A673 (cell line): ENCODE measurements at regions of chr6 and their contacts with region 1.

Region 1: DNA sequence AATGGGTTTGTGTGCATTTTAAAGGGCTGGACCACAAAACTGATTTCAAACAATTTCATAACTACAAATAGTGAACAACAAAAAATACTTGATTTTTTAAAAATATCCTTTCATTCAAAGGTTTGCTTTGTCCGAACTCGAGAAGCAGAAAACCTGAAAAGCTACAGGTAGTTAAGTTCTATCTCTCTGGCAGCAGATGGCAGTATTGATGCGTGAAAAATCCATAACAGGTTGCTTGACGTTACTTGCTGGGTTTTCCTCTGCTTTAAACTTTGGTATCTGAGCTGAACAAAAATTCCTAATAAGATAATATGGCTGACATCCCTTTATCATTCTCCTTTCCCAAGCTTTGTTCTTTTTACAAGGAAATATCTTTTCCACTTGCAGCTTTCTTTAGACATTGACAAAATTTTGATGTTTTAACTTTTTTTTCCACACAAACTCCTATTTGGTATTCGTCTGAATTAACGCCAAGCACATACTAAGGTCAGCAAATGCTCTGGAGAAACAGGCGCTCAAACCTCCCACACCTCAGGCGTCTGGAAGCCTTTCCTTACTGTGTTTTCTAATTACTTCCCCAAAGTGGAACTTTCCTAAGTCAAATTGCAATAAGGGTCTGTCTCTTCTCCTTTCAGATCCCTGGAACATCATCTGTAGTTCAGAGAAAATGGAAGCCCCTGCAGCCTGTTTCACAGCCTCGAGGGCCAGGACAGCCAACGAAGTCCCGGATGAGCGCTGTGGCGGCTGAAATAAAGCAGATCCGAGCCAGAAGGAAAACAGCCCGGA is 50.3 kb upstream of the GFRAL start:
- DNase-seq: peak; percentile 73
- H3K4me3 ChIP-seq: no peak overlapping the region
- H3K27ac ChIP-seq: no peak overlapping the region
- H3K4me1 ChIP-seq: peaks cover 6% of the 10 kb centered on the region
- H3K27me3 ChIP-seq: no peaks in the 10 kb centered on the region
- CTCF ChIP-seq: peak; percentile 78

Region 2: DNA sequence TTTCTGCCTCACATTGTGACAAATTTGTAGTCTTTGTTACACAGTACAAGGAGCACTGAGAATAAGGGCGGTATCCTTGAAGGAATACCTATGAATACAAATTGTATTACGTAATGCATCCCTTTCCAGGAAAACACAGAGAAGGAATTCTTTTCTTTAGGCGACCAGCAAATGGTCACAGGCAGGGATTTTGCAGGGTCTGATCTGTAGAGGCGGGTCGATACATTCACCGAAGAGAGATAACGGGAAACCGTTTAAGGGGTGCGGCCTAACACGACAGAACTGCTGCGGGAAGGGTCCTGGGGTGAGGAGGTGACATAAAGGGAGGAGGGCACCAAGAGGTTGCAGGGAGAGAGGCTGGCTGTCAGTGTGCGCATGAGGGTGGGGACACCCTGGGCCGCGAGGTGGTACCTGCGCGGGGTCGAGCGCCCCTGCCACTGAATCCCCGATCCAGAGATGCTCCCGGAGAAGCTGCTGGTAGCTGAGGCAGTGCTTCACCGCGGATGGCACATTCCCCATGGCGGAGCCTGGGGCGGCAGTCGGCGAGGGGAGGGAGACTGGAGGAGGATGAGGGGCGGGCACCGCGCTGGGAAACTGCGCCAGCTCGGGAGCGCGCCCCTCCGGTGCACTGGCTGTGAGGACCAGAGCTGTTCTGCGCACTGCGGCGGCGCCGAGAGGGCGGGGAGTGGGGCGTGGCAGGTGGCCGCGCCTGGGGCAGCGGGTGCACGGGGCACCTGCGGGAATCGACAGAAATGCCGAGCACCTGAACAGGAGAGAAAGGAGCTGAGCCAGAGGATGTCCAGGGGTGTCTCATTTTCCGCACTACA is 301.8 kb after region 1 on chr6 and contains the start of gene HMGCLL1:
- CTCF ChIA-PET with region 1: no interaction called
- POLR2A ChIA-PET with region 1: no interaction called
- intact Hi-C with region 1: no loop called
- DNase-seq: peak; percentile 37
- H3K4me3 ChIP-seq: peak within 1 kb of the TSS; percentile 37
- H3K27ac ChIP-seq: no peak within 1 kb of the TSS
- H3K4me1 ChIP-seq: peaks cover 5% of the 10 kb centered on the region
- H3K27me3 ChIP-seq: peaks cover 18% of the 10 kb centered on the region
- CTCF ChIP-seq: no peak
- total RNA-seq, gene HMGCLL1: not detected in 2 replicates

Region 3: DNA sequence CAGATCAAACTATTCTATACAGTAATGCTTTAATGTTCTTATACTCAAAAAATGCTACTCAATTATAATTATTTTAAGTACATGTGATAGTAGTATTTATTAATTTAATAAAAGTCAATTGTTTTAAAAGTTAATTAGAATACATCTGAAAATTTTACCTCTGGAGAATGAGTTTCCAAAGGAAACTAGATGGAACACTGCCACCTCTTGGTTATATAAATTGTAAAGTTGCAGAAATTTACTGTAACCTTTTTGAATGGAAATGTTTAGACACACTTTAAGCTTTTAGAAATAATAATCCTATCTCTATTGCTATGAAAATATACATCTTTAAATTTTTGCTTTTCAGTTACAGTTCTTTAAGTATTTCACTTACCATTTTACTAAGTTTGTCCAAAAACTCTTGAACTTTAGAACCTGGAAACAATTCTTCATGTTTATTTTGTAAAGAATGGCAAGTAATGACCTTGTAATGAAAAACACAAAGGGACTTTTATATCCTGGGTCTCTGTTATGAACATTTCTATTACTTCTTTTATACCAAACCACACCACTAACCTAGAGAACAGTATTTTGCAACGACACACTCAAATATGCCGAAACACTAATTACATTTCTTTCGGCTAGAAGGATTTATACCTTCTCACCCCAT is 609.4 kb after region 1 on chr6:
- CTCF ChIA-PET with region 1: no interaction called
- POLR2A ChIA-PET with region 1: no interaction called
- intact Hi-C with region 1: loop called (anchors 10 kb)
- DNase-seq: peak; percentile 39
- H3K4me3 ChIP-seq: no peak overlapping the region
- H3K27ac ChIP-seq: no peak overlapping the region
- H3K4me1 ChIP-seq: peaks cover 14% of the 10 kb centered on the region
- H3K27me3 ChIP-seq: no peaks in the 10 kb centered on the region
- CTCF ChIP-seq: peak; percentile 66

Region 4: DNA sequence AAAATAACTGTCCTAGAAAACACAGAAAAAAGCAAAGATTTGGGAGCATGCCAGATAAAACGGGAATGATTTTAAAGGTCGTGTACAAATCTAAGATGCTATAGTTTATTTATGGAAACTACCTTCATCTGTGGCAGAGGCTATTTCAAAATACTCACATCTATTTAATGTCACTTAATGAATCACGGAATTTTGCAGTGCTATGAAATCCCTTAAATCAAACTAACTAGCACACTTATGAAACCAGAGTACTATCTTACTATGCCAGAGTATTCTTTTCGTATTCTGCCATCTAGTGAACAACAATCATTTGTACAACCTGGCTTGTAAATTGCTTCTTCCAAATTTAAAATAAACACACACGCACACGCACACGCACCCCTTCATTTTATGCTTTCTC is 676.4 kb after region 1 on chr6:
- CTCF ChIA-PET with region 1: no interaction called
- POLR2A ChIA-PET with region 1: no interaction called
- intact Hi-C with region 1: loop called (anchors 5 kb)
- DNase-seq: peak; percentile 60
- H3K4me3 ChIP-seq: peak overlapping the region; percentile 23
- H3K27ac ChIP-seq: no peak overlapping the region
- H3K4me1 ChIP-seq: peaks cover 22% of the 10 kb centered on the region
- H3K27me3 ChIP-seq: no peaks in the 10 kb centered on the region
- CTCF ChIP-seq: peak; percentile 62